GM13976 (cell line): ENCODE measurements at regions of chr10 and their contacts with region 1.

Region 1: DNA sequence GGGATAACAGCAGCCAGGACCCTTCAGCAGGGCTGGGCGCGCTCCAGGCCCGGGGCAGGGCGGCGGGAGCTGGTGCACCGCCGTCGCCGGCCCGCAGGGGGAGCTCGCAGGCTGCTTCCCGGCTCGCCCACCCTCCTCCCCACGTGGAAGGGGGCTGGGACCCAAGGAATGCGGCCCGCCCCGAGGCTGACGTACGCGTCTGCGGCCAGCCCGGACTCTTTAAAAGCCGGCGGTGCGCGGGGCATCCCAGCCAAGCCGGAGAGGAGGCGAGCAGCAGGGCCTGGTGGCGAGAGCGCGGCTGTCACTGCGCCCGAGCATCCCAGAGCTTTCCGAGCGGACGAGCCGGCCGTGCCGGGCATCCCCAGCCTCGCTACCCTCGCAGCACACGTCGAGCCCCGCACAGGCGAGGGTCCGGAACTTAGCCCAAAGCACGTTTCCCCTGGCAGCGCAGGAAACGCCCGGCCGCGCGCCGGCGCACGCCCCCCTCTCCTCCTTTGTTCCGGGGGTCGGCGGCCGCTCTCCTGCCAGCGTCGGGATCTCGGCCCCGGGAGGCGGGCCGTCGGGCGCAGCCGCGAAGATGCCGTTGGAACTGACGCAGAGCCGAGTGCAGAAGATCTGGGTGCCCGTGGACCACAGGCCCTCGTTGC is at the start of gene PFKFB3:
- DNase-seq: peak; percentile 98
- CTCF ChIP-seq: peak; percentile 95

Region 2: GRCh38 chr10:6401562-6402348 is 198.9 kb after region 1 on chr10:
- in situ Hi-C with region 1: loop called (anchors 10 kb)
- DNase-seq: peak; percentile 87
- CTCF ChIP-seq: peak; percentile 86

Region 3: DNA sequence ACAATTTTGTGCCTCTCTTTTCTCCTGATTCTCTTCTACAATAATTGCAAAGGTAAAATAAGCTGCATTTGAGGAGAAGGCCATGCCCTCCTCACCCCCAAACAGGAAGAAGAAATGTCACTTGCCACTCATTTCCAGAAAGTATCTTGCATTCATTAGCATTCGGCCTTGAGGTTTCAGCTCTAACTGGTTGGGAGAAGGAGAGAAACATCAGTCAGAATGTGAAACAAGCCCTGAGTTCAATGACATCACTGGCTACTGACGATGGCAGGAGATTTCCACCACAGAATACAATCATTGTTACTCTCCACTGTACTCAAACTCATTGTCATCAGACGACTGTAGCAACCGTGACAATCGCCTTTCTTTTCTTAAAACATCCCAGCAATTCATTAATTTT is 304.5 kb after region 1 on chr10:
- in situ Hi-C with region 1: no loop called
- DNase-seq: peak; percentile 39
- CTCF ChIP-seq: no peak

Region 4: DNA sequence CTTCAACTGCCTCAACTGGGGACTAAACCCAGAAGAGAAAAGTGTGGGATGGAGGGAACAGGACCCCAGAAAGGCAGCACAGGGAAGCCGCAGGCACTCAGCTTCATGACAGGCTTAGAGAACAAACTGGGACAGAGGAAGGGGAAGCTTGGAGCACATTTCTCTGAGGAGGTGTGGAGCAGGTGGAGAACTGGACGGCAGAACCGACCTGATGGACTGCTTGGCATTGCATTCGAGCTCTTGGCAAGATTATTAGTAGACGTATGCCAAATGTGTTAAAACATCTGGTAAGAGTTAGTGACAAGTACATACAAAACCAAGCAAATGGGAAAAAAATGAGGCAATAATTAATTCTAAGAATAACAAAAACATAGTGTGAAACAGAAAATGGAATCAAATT is 872.3 kb after region 1 on chr10:
- in situ Hi-C with region 1: no loop called
- DNase-seq: no peak
- CTCF ChIP-seq: no peak